ENCODE measurements at regions of chr2 and their contacts with region 1.

Region 1: DNA sequence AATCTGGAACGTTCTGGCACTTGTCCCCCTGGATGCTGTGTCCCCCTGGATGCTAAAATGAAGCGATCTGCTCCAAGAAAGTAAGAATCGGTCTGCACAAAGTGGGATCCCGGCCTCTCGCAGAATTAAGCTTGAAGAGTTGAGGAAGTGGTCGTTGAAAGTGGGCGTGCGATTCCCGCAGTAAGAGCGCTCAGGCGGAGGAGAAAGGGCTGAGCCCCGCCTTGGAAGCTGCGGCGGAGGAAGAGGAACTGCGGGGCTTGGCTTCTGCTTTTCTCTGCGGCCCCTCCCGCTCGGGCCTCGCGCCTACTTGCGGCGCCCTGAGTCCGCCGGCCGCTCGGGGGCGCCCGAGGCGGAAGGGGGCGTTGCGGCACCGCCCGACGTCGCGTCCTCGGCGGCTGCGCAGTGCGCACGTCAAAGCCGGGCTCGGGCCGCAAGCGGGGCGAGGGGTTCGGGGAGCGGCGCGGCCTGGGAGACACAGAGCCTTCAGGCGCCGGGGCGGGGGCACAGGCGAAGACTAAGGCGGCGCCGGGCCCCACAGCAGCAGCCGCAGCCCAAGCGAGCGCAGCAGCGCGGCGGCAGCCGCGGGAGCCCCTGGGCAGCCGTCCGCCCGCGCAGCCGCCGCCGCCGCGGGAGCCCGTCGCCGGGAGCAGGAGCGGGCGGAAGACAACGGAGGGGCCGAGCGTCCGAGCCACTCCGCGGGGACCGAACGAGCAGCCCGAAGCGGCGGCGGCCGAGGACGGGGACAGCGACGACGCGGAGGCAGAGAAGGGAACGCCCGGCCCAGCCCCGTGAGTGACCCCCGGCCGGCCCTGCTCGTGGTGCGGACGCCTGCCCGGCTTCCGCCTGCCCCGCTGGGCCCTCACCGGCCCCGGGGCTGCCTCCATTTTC is at the start of gene CAB39:
- DNase-seq: peak; percentile 74 to 88
- H3K4me3 ChIP-seq: peak within 1 kb of the TSS; percentile 72
- H3K4me3 Mint-ChIP-seq: peak within 1 kb of the TSS; percentile 95
- H3K27ac Mint-ChIP-seq: peak within 1 kb of the TSS; percentile 95
- H3K4me1 ChIP-seq: peaks cover 8% of the 10 kb centered on the region; the same call in 1 of the 2 replicates
- H3K4me1 Mint-ChIP-seq: peaks cover 16% of the 10 kb centered on the region
- H3K27me3 ChIP-seq: no peaks in the 10 kb centered on the region
- H3K27me3 Mint-ChIP-seq: no peaks in the 10 kb centered on the region
- CTCF ChIP-seq: peak; percentile 40 to 46
- total RNA-seq, gene CAB39: 33.2 and 40.4 TPM in 2 replicates

Region 2: GRCh38 chr2:230423851-230424458 is 288.7 kb before region 1 on chr2:
- CTCF ChIA-PET with region 1: no interaction called
- POLR2A ChIA-PET with region 1: no interaction called
- intact Hi-C with region 1: no loop called
- DNase-seq: no peak
- H3K4me3 ChIP-seq: no peak overlapping the region
- H3K4me3 Mint-ChIP-seq: no peak overlapping the region
- H3K27ac Mint-ChIP-seq: no peak overlapping the region
- H3K4me1 ChIP-seq: no peaks in the 10 kb centered on the region
- H3K4me1 Mint-ChIP-seq: no peaks in the 10 kb centered on the region
- H3K27me3 ChIP-seq: no peaks in the 10 kb centered on the region
- H3K27me3 Mint-ChIP-seq: no peaks in the 10 kb centered on the region
- CTCF ChIP-seq: no peak

Region 3: DNA sequence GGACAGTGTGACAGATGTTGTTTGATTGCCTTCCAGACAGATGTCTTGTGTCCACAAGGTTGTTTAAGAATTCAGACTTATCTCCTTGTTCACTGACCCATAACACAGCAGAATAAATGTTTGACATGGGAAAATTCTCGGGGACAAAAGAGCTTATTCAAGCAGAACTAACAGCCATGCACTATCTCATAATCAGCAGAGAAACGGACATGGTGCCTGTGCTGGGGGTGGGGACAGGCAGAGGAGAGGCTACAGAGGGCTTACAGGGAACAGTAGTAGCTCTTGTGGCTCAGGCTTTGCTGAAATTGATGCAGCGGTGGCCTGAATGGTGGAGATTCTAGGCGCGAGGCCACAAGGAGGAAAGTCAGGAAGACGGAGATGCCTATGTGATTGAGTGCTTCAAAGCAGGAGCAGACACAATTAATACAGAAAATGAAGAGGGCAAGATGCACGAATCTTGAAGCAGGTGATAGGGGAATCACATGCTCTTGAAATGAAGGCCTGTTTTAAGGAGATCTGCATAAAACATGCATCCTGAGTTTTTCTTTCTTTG is 62.0 kb before region 1 on chr2:
- CTCF ChIA-PET with region 1: no interaction called
- POLR2A ChIA-PET with region 1: no interaction called
- intact Hi-C with region 1: loop called (anchors 5 kb)
- DNase-seq: peak; percentile 59 to 63
- H3K4me3 ChIP-seq: no peak overlapping the region
- H3K4me3 Mint-ChIP-seq: peak overlapping the region; percentile 27
- H3K27ac Mint-ChIP-seq: peak overlapping the region; percentile 5
- H3K4me1 ChIP-seq: peaks cover 8% of the 10 kb centered on the region; the same call in 1 of the 2 replicates
- H3K4me1 Mint-ChIP-seq: peaks cover 12% of the 10 kb centered on the region
- H3K27me3 ChIP-seq: no peaks in the 10 kb centered on the region
- H3K27me3 Mint-ChIP-seq: no peaks in the 10 kb centered on the region
- CTCF ChIP-seq: no peak

Region 4: GRCh38 chr2:230674401-230674800 is 38.3 kb before region 1 on chr2:
- CTCF ChIA-PET with region 1: no interaction called
- POLR2A ChIA-PET with region 1: interaction called, 12 read pairs
- intact Hi-C with region 1: no loop called
- DNase-seq: no peak
- H3K4me3 ChIP-seq: no peak overlapping the region
- H3K4me3 Mint-ChIP-seq: no peak overlapping the region
- H3K27ac Mint-ChIP-seq: no peak overlapping the region
- H3K4me1 ChIP-seq: peaks cover 7% of the 10 kb centered on the region
- H3K4me1 Mint-ChIP-seq: peaks cover 10% of the 10 kb centered on the region
- H3K27me3 ChIP-seq: no peaks in the 10 kb centered on the region
- H3K27me3 Mint-ChIP-seq: no peaks in the 10 kb centered on the region
- CTCF ChIP-seq: no peak

Region 5: DNA sequence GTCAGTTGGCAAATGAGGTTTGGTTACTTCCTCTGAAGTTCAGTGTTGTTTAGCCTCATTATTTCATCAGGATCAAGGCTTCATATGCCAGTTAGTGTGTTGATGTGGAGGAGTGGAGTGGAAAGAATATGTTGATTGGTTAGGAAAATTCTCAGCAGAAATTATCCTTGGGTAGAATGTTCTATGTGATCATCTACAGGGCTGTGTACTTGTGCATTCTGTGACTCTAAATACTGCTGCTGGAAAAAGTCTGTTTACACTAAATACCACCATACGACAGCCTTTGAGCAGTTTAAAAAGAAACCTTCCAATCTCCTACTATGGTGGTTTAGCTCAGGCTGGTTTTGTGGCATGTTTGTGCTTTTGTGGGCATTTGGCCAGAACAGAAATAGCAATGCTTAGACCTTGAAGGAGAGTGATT is 25.7 kb after region 1 on chr2:
- CTCF ChIA-PET with region 1: no interaction called
- POLR2A ChIA-PET with region 1: no interaction called
- intact Hi-C with region 1: loop called (anchors 1 kb)
- DNase-seq: no peak
- H3K4me3 ChIP-seq: peak overlapping the region; percentile 3; the same call in 1 of the 2 replicates
- H3K4me3 Mint-ChIP-seq: peak overlapping the region; percentile 57
- H3K27ac Mint-ChIP-seq: peak overlapping the region; percentile 36
- H3K4me1 ChIP-seq: peaks cover 50% of the 10 kb centered on the region
- H3K4me1 Mint-ChIP-seq: peaks cover 16% of the 10 kb centered on the region
- H3K27me3 ChIP-seq: no peaks in the 10 kb centered on the region
- H3K27me3 Mint-ChIP-seq: no peaks in the 10 kb centered on the region
- CTCF ChIP-seq: no peak

Region 6: GRCh38 chr2:230751062-230751461 is 38.4 kb after region 1 on chr2:
- CTCF ChIA-PET with region 1: no interaction called
- POLR2A ChIA-PET with region 1: interaction called, 4 read pairs
- intact Hi-C with region 1: loop called (anchors 1 kb)
- DNase-seq: no peak
- H3K4me3 ChIP-seq: no peak overlapping the region
- H3K4me3 Mint-ChIP-seq: no peak overlapping the region
- H3K27ac Mint-ChIP-seq: no peak overlapping the region
- H3K4me1 ChIP-seq: peaks cover 8% of the 10 kb centered on the region
- H3K4me1 Mint-ChIP-seq: peaks cover 9% of the 10 kb centered on the region
- H3K27me3 ChIP-seq: no peaks in the 10 kb centered on the region
- H3K27me3 Mint-ChIP-seq: no peaks in the 10 kb centered on the region
- CTCF ChIP-seq: no peak

Region 7: DNA sequence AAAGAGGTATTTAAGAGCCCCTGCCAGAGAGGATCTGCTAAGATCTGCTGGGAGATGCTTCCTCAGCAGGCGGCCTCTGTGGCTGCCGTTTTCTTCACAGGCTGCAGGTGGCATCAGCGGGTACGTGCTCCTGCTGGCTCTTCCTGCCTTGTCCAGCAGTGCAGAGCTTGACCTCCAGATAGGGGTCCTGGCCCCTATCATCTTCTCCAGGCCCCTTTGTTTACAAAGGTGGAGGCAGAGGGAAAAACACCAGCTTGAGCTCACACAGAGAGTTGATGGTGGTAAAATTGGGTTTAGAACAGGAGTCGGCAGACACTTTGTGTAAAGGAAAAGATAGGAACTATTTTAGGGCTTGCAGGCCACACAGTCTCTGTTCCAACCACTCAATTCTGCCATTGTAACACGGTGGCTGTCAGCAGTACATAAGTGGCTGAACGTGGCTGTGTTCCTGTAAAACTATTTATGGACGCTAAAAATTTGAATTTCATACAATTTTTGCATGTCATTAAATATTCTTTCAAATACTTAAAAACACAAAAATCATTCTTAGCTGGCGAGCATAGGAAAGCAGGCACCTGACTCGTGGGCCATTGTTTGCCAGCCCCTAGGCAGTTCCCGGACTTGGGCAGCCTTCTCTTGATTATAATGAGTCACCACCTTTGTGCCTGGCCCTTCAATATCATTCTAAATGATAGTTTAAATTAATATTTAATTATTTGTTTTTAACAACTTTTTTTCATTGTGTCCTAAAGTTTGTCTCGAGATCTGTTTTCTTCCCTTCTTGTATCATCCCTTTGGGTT is 584.6 kb after region 1 on chr2:
- CTCF ChIA-PET with region 1: no interaction called
- POLR2A ChIA-PET with region 1: no interaction called
- intact Hi-C with region 1: no loop called
- DNase-seq: peak; percentile 56 to 59
- H3K4me3 ChIP-seq: no peak overlapping the region
- H3K4me3 Mint-ChIP-seq: no peak overlapping the region
- H3K27ac Mint-ChIP-seq: no peak overlapping the region
- H3K4me1 ChIP-seq: no peaks in the 10 kb centered on the region
- H3K4me1 Mint-ChIP-seq: peaks cover 6% of the 10 kb centered on the region
- H3K27me3 ChIP-seq: no peaks in the 10 kb centered on the region
- H3K27me3 Mint-ChIP-seq: no peaks in the 10 kb centered on the region
- CTCF ChIP-seq: peak; percentile 50 to 78

Region 8: DNA sequence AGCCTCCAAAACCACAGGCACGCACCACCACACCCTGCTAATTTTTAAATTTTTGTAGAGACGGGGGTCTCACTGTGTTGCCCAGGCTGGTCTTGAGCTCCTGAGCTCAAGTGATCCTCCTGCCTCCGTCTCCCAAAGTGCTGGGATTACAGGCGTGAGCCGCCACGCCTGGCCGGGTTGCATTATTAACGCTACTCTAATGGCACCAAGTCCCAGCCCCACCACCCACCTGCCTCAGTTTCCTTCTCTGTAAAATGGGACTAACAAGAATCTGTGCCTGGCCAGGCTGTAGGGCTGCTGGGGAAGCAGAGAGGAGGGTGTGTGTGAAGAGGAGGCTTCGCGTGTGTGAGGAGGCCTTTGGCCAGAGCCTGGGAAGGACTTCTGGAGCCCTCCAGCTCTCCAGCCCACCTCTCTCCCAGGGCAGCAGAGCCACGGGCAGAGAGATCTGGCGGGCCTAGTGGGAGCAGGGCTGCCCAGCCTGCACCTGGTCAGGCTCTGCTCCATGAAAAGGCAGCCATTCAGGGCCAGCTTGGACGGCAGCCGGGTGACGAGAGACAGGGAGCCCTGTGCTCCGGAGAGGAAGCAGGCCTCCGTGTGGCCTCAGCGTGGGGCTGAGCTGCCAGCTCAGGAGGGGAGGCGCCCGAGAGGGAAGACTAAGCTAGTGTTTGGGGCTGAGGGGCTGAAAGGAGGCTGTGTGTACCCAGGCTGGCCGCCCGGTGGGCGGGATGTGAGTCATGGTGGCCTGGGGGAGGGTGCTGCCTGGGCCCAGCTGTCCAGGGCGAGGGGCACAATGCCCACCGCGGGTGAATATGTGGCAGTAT is 675.4 kb after region 1 on chr2:
- CTCF ChIA-PET with region 1: no interaction called
- POLR2A ChIA-PET with region 1: no interaction called
- intact Hi-C with region 1: no loop called
- DNase-seq: no peak
- H3K4me3 ChIP-seq: no peak overlapping the region
- H3K4me3 Mint-ChIP-seq: no peak overlapping the region
- H3K27ac Mint-ChIP-seq: no peak overlapping the region
- H3K4me1 ChIP-seq: no peaks in the 10 kb centered on the region
- H3K4me1 Mint-ChIP-seq: no peaks in the 10 kb centered on the region
- H3K27me3 ChIP-seq: no peaks in the 10 kb centered on the region
- H3K27me3 Mint-ChIP-seq: no peaks in the 10 kb centered on the region
- CTCF ChIP-seq: no peak

Measured in Caco-2 (cell line).